Activated CD4-positive, alpha-beta memory T cell treated with anti-CD3 and anti-CD28 coated beads for 36 hours (primary cell): ENCODE measurements at regions of chr4 and their contacts with region 1.

Region 1: DNA sequence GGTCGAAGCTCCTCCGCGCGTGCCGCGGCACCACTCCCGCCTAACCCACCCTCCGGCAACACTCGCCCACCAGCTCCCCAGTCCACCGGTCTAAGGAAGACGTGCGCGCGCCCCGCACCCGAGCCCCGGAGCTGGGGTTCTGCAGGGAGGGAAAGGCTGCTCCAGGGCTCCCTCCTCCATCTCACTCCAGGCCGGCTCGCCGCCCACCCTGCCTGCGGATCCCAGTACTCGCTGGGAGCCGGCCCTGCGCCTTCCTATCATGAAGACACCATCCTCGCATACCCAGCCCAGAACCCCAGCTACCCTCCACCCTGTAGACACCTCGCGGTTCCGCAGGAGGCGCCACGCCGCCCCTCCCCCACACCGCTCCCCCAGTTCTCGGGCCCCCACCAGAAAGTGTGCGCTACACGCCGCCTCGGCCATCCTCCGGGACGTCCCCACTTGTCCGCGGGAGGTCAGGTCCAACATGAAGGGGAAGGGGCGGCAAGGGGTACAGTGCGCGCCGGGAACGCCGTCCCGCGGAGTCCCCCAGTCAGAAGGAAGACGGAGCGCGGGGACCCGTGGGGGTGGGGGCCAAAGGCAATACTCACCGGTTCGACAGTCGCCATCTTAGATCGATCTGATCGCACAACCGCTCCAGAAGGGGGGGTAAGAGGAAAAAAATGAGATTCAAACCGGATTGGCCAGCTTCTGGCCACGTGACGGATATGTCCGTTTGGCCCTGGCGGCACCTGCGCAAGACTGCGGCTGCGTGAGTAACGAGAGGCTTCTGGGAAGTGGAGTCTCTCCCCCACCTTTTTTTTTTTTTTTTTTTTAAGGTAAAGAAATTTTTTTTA is at the start of gene EIF4E:
- DNase-seq: peak; percentile 98
- H3K4me3 Mint-ChIP-seq: peak within 1 kb of the TSS; percentile 88
- H3K27ac Mint-ChIP-seq: peak within 1 kb of the TSS; percentile 99
- H3K4me1 Mint-ChIP-seq: peaks cover 35% of the 10 kb centered on the region
- H3K27me3 Mint-ChIP-seq: no peaks in the 10 kb centered on the region
- total RNA-seq, gene EIF4E: 121 to 124 TPM

Region 2: GRCh38 chr4:98143001-98143899 is 785.5 kb before region 1 on chr4 and contains the start of gene STPG2:
- CTCF ChIA-PET with region 1: no interaction called
- POLR2A ChIA-PET with region 1: interaction called, 5 read pairs
- intact Hi-C with region 1: loop called (anchors 1 kb)
- DNase-seq: peak; percentile 95
- H3K4me3 Mint-ChIP-seq: peak within 1 kb of the TSS; percentile 95
- H3K27ac Mint-ChIP-seq: peak within 1 kb of the TSS; percentile 98
- H3K4me1 Mint-ChIP-seq: peaks cover 20% of the 10 kb centered on the region
- H3K27me3 Mint-ChIP-seq: no peaks in the 10 kb centered on the region
- total RNA-seq, gene STPG2: not detected

Region 3: GRCh38 chr4:98482847-98483806 is 445.6 kb before region 1 on chr4:
- CTCF ChIA-PET with region 1: no interaction called
- POLR2A ChIA-PET with region 1: interaction called, 4 read pairs
- intact Hi-C with region 1: loop called (anchors 1 kb)
- DNase-seq: peak; percentile 69
- H3K4me3 Mint-ChIP-seq: peak overlapping the region; percentile 47
- H3K27ac Mint-ChIP-seq: peak overlapping the region; percentile 96
- H3K4me1 Mint-ChIP-seq: peaks cover 74% of the 10 kb centered on the region
- H3K27me3 Mint-ChIP-seq: no peaks in the 10 kb centered on the region

Region 4: DNA sequence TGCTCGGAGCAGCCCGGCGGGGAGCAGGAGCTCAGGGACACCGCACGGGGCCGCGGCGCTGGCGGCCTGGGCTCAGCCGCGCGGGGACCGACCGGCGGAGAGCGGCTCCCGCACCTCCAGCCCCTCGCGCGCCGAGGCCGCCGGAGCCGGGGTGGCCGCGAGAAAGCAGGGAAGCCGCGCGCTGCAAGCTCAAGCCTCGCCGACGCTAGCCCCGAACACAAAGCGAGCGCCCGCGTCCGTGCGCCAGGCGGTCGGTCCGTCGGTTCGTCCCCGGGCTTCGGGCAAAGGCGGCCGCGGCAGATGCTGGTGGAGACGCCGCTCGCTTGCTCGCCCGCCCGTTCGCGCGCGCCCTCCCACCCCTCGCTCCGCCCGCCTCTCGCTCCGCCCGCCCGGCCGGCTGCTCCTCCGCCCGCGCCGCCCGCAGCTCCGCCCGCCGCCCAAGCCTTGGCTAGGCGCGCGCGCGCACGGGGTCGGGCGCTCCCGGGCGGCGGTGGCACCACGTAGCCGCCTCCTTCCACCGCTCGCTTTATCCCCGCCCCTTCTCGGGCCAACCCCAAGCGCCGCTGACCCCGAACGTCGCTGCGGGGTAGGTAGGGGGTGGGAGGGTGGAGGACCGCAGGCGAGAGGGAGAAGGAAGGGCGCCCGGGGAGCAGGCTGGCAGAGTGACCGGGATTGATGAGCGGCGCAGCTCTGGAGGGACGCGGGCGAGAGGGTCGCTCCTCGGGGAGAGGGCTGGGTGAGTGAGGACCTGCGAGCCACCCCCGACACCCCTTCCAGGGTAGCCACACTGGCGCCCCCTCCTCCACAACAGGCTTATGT is 270.2 kb before region 1 on chr4 and contains the start of gene TSPAN5:
- CTCF ChIA-PET with region 1: interaction called, 3 read pairs
- POLR2A ChIA-PET with region 1: interaction called, 17 read pairs
- intact Hi-C with region 1: loop called (anchors 1 kb)
- DNase-seq: peak; percentile 87
- H3K4me3 Mint-ChIP-seq: peak within 1 kb of the TSS; percentile 87
- H3K27ac Mint-ChIP-seq: peak within 1 kb of the TSS; percentile 79
- H3K4me1 Mint-ChIP-seq: peaks cover 78% of the 10 kb centered on the region
- H3K27me3 Mint-ChIP-seq: no peaks in the 10 kb centered on the region
- total RNA-seq, gene TSPAN5: 19.2 to 20.4 TPM

Region 5: GRCh38 chr4:98945297-98945850 is 16.7 kb after region 1 on chr4:
- CTCF ChIA-PET with region 1: no interaction called
- POLR2A ChIA-PET with region 1: no interaction called
- intact Hi-C with region 1: no loop called
- DNase-seq: no peak
- H3K4me3 Mint-ChIP-seq: no peak overlapping the region
- H3K27ac Mint-ChIP-seq: no peak overlapping the region
- H3K4me1 Mint-ChIP-seq: no peaks in the 10 kb centered on the region
- H3K27me3 Mint-ChIP-seq: no peaks in the 10 kb centered on the region

Region 6: GRCh38 chr4:99054428-99054994 is 125.8 kb after region 1 on chr4:
- CTCF ChIA-PET with region 1: interaction called, 14 read pairs
- POLR2A ChIA-PET with region 1: interaction called, 5 read pairs
- intact Hi-C with region 1: loop called (anchors 1 kb)
- DNase-seq: no peak
- H3K4me3 Mint-ChIP-seq: no peak overlapping the region
- H3K27ac Mint-ChIP-seq: peak overlapping the region; percentile 73
- H3K4me1 Mint-ChIP-seq: peaks cover 42% of the 10 kb centered on the region
- H3K27me3 Mint-ChIP-seq: no peaks in the 10 kb centered on the region

Region 7: GRCh38 chr4:99563310-99564186 is 634.8 kb after region 1 on chr4 and contains the start of gene TRMT10A:
- CTCF ChIA-PET with region 1: no interaction called
- POLR2A ChIA-PET with region 1: no interaction called
- intact Hi-C with region 1: loop called (anchors 1 kb)
- DNase-seq: peak; percentile 98
- H3K4me3 Mint-ChIP-seq: peak within 1 kb of the TSS; percentile 93
- H3K27ac Mint-ChIP-seq: peak within 1 kb of the TSS; percentile 98
- H3K4me1 Mint-ChIP-seq: peaks cover 6% of the 10 kb centered on the region
- H3K27me3 Mint-ChIP-seq: peaks cover 7% of the 10 kb centered on the region
- total RNA-seq, gene TRMT10A: 5.6 to 8.9 TPM